HEK293 (cell line): ENCODE measurements at regions of chr1 and their contacts with region 1.

Region 1: DNA sequence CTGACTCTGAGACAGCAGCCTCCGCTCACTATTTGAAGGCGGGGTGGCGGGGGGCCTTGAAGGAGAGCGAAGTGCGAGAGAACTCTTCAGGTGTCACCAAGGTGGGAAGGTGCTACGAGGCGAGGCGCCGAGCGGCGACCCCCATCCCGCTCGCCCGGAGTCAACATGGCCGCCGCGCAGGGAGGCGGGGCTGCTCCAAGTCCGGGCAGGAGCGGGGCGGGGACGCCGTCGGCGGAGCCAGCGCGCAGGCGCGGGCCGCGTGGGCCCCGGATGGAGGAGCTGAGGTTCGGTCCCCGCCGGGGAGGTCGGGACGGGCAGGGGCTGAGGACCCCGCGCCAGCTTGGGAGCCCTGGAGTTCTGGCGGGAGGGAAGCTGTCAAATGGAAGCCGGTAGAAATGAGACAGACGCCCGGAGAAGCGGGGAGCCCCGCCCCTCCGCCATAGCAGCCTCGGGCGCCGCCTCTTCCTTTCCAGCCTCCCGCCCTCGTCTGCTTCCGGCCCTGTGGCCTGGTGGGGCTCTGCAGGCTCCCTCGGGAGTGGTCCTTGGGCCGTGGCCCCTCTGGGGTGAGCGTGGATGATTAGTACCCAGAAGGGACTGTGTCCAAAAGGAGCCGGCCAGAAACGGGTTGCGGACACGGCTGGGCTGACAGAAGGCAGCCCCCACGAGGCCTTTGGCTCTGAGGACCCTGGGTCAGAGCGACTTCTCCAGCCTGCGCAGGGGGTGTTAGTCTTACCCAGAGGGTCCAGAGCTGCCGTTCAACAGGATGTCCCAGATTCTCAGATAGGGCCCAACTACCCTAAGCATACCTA is at the start of gene PIGV:
- H3K4me3 ChIP-seq: peak within 1 kb of the TSS; percentile 75
- H3K27ac ChIP-seq: peak within 1 kb of the TSS; percentile 90
- H3K4me1 ChIP-seq: peaks cover 14% of the 10 kb centered on the region
- CTCF ChIP-seq: 0 out of 2 replicates have a peak, but pooled peaks have one; percentile 9

Region 2: DNA sequence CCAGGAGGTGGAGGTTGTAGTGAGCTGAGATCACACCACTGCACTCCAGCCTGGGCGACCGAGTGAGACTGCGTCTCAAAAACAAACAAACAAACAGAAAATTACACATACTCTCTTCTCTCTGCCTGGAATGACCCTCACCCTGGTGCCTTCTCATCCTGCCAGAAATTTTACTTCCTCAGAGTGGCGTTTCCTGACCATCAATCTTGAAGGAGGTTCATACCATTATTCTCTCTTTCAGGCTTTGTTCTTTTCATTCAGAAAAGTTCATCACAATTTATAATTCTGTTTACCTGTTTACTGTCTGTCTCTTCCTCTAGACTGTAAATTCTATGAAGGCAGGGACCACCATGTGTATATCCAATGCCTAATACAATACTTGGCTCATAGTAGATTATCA is 179.0 kb before region 1 on chr1:
- CTCF ChIA-PET with region 1: interaction called, 281 read pairs
- POLR2A ChIA-PET with region 1: interaction called, 7 read pairs
- H3K4me3 ChIP-seq: no peak overlapping the region
- H3K27ac ChIP-seq: no peak overlapping the region
- H3K4me1 ChIP-seq: no peaks in the 10 kb centered on the region
- CTCF ChIP-seq: no peak

Region 3: DNA sequence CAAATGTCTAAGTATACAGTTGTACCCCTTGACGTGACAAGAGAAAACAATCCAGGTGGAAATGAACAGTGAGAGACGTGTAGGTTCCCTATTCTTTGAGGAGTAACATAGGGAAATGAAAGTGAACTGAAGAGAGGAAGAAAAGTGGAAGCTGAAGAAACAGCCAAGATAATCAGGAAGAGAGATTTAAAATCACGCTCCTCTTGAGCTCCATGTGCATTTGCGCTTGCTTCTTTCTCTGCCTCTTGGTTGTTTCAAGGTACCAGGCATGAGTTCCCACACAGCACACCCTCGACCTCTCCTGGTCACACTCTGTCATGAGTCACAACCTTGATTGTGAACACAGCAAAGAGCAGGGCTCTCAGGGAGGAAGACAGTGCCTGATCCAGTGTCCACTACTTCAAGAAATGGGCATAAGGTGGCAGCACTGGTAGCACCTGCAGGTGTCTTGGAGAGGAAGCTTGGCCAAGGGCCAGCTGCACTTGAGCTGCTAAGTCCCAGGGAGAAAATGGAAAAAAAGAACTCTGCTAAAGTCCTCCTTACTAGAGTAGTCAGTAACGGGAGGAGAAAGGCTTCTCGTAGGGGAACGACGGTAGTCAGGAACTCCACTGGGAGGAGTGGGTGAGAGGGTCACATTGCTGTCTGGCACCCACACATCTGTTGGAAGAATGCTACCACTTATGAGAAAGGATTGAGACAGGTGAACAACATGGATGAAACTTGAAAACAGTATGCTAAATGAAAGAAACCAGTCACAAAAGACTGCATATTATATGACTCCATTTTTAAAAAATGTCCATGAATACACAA is 110.4 kb before region 1 on chr1:
- CTCF ChIA-PET with region 1: interaction called, 74 read pairs
- POLR2A ChIA-PET with region 1: interaction called, 6 read pairs
- H3K4me3 ChIP-seq: no peak overlapping the region
- H3K27ac ChIP-seq: no peak overlapping the region
- H3K4me1 ChIP-seq: no peaks in the 10 kb centered on the region
- CTCF ChIP-seq: peak; percentile 97

Region 4: GRCh38 chr1:26695356-26696118 is 92.4 kb before region 1 on chr1 and contains the start of gene ARID1A:
- CTCF ChIA-PET with region 1: interaction called, 58 read pairs
- POLR2A ChIA-PET with region 1: interaction called, 56 read pairs
- H3K4me3 ChIP-seq: peak within 1 kb of the TSS; percentile 72
- H3K27ac ChIP-seq: peak within 1 kb of the TSS; percentile 92
- H3K4me1 ChIP-seq: peaks cover 19% of the 10 kb centered on the region
- CTCF ChIP-seq: peak; percentile 75

Region 5: DNA sequence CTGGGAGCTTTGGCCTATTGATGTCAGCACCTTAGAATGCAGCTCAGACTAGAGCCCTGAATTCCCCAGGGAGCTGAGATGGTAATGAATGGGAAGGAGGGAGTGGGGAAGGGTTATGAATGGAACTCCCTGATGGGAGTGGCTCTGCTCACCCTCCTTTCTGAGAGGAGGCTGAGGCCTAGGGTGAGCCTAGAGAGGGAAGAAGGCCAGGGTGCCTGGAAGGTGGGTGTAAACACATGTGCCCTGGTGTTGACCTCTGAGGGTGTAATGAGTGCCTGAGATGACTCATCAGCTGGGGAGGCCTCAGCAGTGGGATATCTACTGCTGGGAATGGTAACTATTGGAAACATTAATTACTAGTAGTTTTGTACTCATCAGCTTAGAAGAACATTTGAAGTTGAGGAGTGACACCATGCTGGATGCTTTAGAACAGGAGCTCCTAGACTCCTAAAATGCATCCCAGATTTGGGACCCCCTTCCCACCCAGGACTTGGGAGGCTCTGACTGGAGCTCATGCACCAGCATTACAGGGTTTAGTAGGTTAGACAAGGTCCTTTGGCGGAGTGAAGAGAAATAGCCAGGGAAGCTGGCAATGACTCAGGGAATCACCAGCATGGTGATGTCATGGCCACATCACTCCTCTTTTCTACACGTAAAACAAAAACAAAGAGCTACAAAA is 16.1 kb before region 1 on chr1:
- CTCF ChIA-PET with region 1: interaction called, 13 read pairs
- POLR2A ChIA-PET with region 1: interaction called, 8 read pairs
- H3K4me3 ChIP-seq: no peak overlapping the region
- H3K27ac ChIP-seq: no peak overlapping the region
- H3K4me1 ChIP-seq: no peaks in the 10 kb centered on the region
- CTCF ChIP-seq: no peak

Region 6: GRCh38 chr1:26799479-26800142 is 11.7 kb after region 1 on chr1:
- CTCF ChIA-PET with region 1: interaction called, 16 read pairs
- POLR2A ChIA-PET with region 1: interaction called, 3 read pairs
- H3K4me3 ChIP-seq: no peak overlapping the region
- H3K27ac ChIP-seq: no peak overlapping the region
- H3K4me1 ChIP-seq: peaks cover 3% of the 10 kb centered on the region; the same call in 1 of the 2 replicates
- CTCF ChIP-seq: no peak; the same call in 1 of the 2 replicates

Region 7: GRCh38 chr1:26874896-26875295 is 87.0 kb after region 1 on chr1:
- CTCF ChIA-PET with region 1: interaction called, 13 read pairs
- POLR2A ChIA-PET with region 1: no interaction called
- H3K4me3 ChIP-seq: no peak overlapping the region
- H3K27ac ChIP-seq: no peak overlapping the region
- H3K4me1 ChIP-seq: no peaks in the 10 kb centered on the region
- CTCF ChIP-seq: no peak